ENCODE measurements at regions of chr1 and their contacts with region 1.

Region 1: DNA sequence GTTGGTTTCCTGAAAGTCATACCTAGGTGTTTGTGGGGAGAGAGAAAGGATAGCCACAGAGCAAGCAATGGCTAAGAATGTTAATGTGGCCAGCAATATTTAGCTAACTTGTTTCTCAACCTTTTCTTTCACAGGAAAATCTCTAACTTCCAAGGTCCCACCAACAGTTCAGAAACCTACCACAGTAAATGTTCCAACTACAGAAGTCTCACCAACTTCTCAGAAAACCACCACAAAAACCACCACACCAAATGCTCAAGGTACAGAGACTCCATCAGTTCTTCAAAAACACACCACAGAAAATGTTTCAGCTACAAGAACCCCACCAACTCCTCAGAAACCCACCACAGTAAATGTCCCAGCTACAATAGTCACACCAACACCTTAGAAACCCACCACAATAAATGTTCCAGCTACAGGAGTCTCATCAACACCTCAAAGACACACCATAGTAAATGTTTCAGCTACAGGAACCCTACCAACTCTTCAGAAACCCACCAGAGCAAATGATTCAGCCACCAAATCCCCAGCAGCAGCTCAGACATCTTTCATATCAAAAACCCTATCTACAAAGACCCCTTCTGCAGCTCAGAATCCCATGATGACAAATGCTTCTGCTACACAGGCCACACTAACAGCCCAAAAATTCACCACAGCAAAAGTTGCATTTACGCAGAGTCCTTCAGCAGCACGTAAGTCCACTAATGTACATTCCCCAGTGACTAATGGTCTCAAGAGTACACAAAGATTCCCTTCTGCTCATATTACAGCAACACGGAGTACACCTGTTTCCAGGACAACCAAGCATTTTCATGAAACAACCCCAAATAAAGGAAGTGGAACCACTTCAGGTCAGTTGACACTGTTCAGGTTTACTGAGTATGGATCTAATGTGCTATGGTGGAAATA is 15.3 kb downstream of the CD55 start:
- DNase-seq: peak; percentile 81
- ATAC-seq: peak; percentile 75
- H3K4me3 Mint-ChIP-seq: peak overlapping the region; percentile 57
- H3K27ac Mint-ChIP-seq: peak overlapping the region; percentile 93
- H3K4me1 Mint-ChIP-seq: peaks cover 79% of the 10 kb centered on the region
- H3K27me3 Mint-ChIP-seq: peaks cover 3% of the 10 kb centered on the region
- CTCF ChIP-seq: no peak

Region 2: GRCh38 chr1:207084701-207085180 is 252.1 kb before region 1 on chr1:
- CTCF ChIA-PET with region 1: interaction called, 4 read pairs
- POLR2A ChIA-PET with region 1: interaction called, 3 read pairs
- intact Hi-C with region 1: loop called (anchors 5 kb)
- DNase-seq: peak; percentile 73
- ATAC-seq: peak; percentile 83
- H3K4me3 Mint-ChIP-seq: no peak overlapping the region
- H3K27ac Mint-ChIP-seq: no peak overlapping the region
- H3K4me1 Mint-ChIP-seq: peaks cover 25% of the 10 kb centered on the region
- H3K27me3 Mint-ChIP-seq: peaks cover 2% of the 10 kb centered on the region
- CTCF ChIP-seq: peak; percentile 70

Region 3: GRCh38 chr1:207277241-207277640 is 59.6 kb before region 1 on chr1:
- CTCF ChIA-PET with region 1: no interaction called
- POLR2A ChIA-PET with region 1: no interaction called
- intact Hi-C with region 1: no loop called
- DNase-seq: no peak
- ATAC-seq: no peak
- H3K4me3 Mint-ChIP-seq: no peak overlapping the region
- H3K27ac Mint-ChIP-seq: peak overlapping the region; percentile 29
- H3K4me1 Mint-ChIP-seq: peaks cover 25% of the 10 kb centered on the region
- H3K27me3 Mint-ChIP-seq: no peaks in the 10 kb centered on the region
- CTCF ChIP-seq: no peak

Region 4: GRCh38 chr1:207321079-207321789 is 15.6 kb before region 1 on chr1 and contains the start of gene CD55:
- CTCF ChIA-PET with region 1: interaction called, 50 read pairs
- POLR2A ChIA-PET with region 1: interaction called, 122 read pairs
- intact Hi-C with region 1: loop called (anchors 2 kb)
- DNase-seq: peak; percentile 100
- ATAC-seq: peak; percentile 92
- H3K4me3 Mint-ChIP-seq: peak within 1 kb of the TSS; percentile 84
- H3K27ac Mint-ChIP-seq: peak within 1 kb of the TSS; percentile 97
- H3K4me1 Mint-ChIP-seq: peaks cover 32% of the 10 kb centered on the region
- H3K27me3 Mint-ChIP-seq: no peaks in the 10 kb centered on the region
- CTCF ChIP-seq: peak; percentile 17
- total RNA-seq, gene CD55: 100 to 102 TPM

Region 5: DNA sequence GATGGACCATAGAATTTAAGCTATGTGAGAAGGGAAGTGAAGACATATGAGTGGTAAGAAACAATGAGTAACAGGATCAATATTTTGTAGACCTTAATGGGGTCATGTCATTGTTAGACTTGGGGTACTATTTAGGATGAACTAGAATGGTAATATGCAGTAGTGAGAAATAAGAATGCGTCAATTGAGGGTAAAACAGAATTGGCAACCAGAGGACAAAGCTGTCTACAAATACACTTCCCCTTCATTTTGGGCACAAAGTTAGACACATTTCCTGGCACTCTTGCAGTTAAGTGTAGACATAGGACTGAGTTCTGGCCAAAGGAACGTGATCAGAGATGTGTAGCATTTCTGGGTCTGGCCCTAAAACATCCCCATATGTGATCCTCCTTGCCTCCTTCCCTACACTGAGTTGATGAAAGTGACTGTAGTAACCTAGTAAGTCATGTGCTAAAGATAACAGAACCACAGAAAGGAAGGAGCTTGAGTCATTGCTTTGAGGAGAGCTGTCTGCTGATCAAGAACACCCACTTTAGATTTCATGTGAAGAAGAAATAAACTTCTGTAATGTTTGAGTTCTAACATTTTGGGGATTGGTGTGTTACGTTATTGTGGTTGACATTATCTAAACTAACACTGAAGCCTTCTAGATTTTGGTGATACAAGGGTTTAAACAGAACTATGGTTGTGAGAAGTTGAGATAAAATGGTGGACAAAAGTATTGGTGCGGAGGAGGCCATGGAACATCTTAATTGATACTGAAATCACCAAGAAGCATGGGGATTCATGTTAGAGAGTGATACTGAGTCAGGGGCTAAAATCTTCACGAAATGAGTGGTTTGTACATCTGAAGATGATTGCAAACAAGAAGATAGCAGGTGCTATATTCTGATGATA is 26.4 kb after region 1 on chr1:
- CTCF ChIA-PET with region 1: interaction called, 9 read pairs
- POLR2A ChIA-PET with region 1: interaction called, 25 read pairs
- intact Hi-C with region 1: no loop called
- DNase-seq: peak; percentile 45
- ATAC-seq: peak; percentile 87
- H3K4me3 Mint-ChIP-seq: no peak overlapping the region
- H3K27ac Mint-ChIP-seq: no peak overlapping the region
- H3K4me1 Mint-ChIP-seq: peaks cover 8% of the 10 kb centered on the region
- H3K27me3 Mint-ChIP-seq: no peaks in the 10 kb centered on the region
- CTCF ChIP-seq: no peak

Region 6: DNA sequence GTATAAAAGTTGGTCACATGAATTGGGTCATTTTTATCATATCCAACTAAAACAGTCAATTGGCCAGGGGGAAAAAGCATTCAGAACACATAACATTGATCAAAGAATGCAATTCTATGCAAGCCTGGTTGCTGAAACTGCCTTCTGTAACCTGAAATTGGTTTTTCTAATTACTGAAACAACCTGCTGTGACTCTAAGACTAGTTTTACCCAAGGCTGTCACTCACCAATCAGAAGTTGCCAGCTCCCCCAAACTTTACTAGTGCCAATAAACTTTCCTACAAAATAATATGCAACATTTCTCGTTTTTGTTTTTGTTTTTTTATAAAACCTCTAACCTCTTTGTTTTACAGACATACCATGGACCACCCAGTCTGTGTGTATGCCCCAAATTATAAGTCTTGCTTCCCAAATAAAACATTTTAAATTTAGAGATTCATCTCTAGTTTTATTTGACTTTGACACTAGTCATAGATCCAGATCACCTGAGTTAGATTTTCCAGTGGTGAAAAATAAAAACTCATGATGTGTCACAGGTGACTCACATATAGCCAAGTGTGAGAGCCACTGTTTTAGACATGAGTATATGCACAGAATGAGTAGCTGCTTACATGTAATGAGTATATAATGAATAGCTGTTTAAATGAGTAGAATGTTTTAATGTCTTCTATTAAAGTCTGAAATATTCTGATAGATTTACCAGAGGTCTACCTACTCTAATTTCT is 53.1 kb after region 1 on chr1:
- CTCF ChIA-PET with region 1: interaction called, 3 read pairs
- POLR2A ChIA-PET with region 1: no interaction called
- intact Hi-C with region 1: loop called (anchors 2 kb)
- DNase-seq: peak; percentile 33
- ATAC-seq: peak; percentile 97
- H3K4me3 Mint-ChIP-seq: peak overlapping the region; percentile 37
- H3K27ac Mint-ChIP-seq: peak overlapping the region; percentile 83
- H3K4me1 Mint-ChIP-seq: peaks cover 18% of the 10 kb centered on the region
- H3K27me3 Mint-ChIP-seq: no peaks in the 10 kb centered on the region
- CTCF ChIP-seq: no peak